ENCODE measurements at regions of chr17 and their contacts with region 1.

Region 1: DNA sequence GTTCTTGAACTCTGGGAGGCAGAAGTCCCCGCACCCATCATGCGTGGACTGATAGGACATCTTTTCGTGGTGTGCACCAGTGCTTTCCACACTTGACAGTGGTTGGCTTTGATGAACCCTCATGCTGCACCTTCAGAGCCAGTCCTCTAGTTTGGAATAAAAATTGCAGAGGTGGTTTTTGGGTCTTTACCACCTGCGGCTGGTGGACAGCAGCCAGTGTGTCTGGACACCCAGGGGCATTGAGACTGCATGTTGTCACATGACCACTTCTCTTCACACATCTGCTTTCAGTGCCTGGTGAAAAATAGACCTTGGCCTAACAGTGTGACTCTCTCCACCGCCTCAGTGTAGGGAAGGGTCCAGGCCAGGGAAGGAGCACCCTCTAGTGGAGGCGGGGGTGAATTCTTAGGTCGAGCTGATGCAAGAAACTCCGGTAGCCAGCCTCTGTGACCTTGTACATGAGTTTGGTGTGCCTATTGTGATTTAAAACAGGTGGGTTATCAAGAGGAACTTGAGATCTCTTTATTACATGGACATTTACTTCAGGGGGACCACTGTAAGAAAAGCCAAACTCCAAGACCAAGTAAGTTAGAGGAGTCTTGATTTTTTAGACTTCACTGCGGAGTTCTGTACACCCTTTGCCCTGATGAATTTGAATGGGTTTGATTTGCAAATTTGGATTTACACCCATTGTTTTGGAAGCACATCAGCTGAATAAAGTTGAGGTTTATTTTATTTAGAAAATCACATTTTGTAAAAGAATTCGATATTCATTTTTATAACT is 17.9 kb downstream of the GOSR2 start:
- DNase-seq: peak; percentile 60
- H3K4me3 ChIP-seq: no peak overlapping the region
- H3K27ac ChIP-seq: no peak overlapping the region
- H3K4me1 ChIP-seq: peaks cover 6% of the 10 kb centered on the region
- H3K27me3 ChIP-seq: no peaks in the 10 kb centered on the region
- CTCF ChIP-seq: peak; percentile 26 to 72 (median 58)
- POLR2A ChIP-seq: no peak

Region 2: GRCh38 chr17:46841561-46842379 is 99.0 kb before region 1 on chr17:
- intact Hi-C with region 1: loop called (anchors 5 kb)
- DNase-seq: no peak
- H3K4me3 ChIP-seq: no peak overlapping the region
- H3K27ac ChIP-seq: no peak overlapping the region
- H3K4me1 ChIP-seq: no peaks in the 10 kb centered on the region
- H3K27me3 ChIP-seq: no peaks in the 10 kb centered on the region
- CTCF ChIP-seq: peak; percentile 41 to 67 (median 51)
- POLR2A ChIP-seq: no peak

Region 3: DNA sequence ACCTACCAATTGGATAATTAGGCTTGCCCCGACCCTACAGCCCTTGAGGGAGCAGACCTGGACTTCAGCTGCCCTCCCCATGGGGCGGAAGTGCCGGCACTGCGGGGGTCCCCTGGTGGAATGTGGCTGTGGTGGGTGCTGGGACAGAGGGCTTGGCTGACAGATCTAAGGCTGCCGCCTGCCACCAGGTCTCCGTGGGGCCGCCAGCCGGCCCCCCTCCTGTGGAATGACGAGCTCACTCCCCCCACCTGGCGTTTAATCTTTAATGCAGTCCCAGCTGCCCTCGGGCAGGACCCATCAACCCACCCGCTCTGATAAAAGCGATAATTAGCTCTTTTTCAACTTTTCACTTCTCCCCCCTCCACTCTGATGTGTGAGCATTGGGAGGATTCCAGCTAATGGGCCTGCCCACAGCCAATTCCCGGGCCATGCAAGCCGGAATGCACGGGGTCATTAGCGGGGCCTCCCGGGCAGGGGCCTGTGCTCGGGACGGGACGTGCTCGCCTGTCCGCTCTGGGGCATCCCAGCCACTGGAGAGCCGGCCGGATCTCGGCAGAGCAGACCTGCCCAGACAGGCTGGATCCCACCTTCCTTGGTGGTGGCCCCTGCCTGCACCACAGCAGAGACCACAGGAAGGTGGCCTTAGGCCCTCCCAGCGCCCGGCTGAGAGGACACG is 46.2 kb before region 1 on chr17:
- intact Hi-C with region 1: no loop called
- DNase-seq: no peak
- H3K4me3 ChIP-seq: no peak overlapping the region
- H3K27ac ChIP-seq: no peak overlapping the region
- H3K4me1 ChIP-seq: no peaks in the 10 kb centered on the region
- H3K27me3 ChIP-seq: no peaks in the 10 kb centered on the region
- CTCF ChIP-seq: no peak
- POLR2A ChIP-seq: no peak

Region 4: DNA sequence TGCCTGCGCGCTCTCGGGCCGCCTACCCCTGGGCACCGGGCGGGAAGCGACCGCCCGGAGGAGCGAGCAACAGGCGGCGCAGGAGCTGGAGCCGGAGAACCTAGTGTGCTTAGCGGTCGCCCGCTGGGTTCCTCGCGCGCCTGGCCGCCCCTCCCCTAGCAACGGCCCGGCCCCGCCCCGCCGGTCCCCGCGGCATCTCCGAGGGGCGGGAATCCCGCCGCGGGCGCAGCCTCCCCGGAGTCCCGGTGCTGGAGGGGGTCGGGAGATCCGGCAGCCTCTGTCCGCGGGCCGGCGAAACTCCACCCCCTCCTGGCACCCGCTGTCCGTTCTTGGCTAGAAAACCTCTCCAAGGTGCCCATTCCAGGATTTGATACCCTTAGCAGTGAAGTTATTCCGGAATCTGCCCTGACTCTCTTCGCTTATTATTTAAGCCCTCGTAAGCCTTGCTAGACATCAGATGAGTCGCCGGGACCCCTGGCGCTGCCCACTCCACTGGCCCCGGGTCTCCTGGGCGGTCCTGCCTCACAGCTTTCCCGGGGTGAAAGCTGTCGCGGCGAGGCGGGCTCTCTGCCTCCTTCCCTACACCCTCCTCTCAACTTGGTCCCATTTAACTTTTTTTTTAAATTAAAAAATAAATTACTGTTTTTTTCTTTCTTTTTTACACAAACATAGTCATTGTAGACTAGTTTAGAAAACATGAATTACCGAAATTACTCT is 38.5 kb after region 1 on chr17 and contains the start of gene RPRML:
- intact Hi-C with region 1: no loop called
- DNase-seq: no peak
- H3K4me3 ChIP-seq: peak within 1 kb of the TSS; percentile 34 to 46
- H3K27ac ChIP-seq: no peak within 1 kb of the TSS
- H3K4me1 ChIP-seq: peaks cover 3% of the 10 kb centered on the region
- H3K27me3 ChIP-seq: no peaks in the 10 kb centered on the region
- CTCF ChIP-seq: no peak
- POLR2A ChIP-seq: no peak
- total RNA-seq, gene RPRML: 2.2 TPM in 1 of 2 donors, not detected in the other

Region 5: DNA sequence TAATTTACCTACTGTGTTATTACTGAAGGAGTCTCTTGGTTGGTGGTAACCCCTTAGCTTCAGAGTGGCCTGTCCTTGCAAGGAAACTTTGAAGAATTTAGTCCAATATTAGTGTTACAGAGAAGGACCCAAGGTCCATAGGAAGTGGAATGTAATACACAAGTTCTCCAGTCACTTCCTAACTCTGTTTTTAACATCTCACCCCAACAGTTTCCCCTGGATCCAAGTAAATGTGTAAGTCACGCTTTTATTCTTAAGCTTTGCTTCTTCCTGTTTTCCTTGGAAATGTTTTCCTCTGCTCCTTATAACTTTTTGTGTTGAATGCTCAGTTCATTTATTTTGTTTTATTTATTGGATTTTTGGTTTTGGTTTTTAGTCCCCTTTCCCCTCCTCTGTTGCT is 64.1 kb after region 1 on chr17:
- intact Hi-C with region 1: loop called (anchors 5 kb)
- DNase-seq: no peak
- H3K4me3 ChIP-seq: no peak overlapping the region
- H3K27ac ChIP-seq: no peak overlapping the region
- H3K4me1 ChIP-seq: no peaks in the 10 kb centered on the region
- H3K27me3 ChIP-seq: no peaks in the 10 kb centered on the region
- CTCF ChIP-seq: no peak
- POLR2A ChIP-seq: no peak